ENCODE measurements at regions of chr5 and their contacts with region 1.

Region 1: DNA sequence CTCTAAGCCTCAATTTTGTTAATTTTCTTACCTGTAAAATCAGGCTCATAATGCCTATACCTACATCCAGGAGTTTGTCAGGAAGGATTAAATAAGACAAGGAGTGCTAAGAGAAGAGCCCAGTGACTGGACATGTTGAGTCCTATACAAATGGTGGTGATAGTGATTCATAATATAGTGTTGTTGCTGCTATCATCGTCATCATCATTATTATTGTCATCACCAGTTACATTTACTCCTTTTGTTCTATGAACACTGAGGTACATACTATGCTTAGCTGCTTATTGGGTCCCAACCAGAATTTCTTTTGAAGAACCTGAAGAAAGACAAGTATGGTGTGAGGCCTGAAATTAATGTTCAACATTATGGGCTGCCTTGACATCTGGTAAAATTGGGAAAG is 114.9 kb upstream of the GRIA1 start:
- DNase-seq: no peak

Region 2: GRCh38 chr5:152994033-152994680 is 381.5 kb before region 1 on chr5:
- intact Hi-C with region 1: no loop called
- DNase-seq: no peak

Region 3: GRCh38 chr5:154478224-154478565 is 1102.6 kb after region 1 on chr5 and contains the start of gene HAND1:
- intact Hi-C with region 1: loop called in 1 of 2 experiments (anchors 10 kb)
- DNase-seq: no peak
- total RNA-seq, gene HAND1: not detected